Heart left ventricle (tissue), 16 donors: ENCODE measurements at regions of chr10 and their contacts with region 1.

Region 1: GRCh38 chr10:33341637-33342036 is 7.2 kb upstream of the NRP1 start:
- DNase-seq: no peak
- ATAC-seq: no peak
- H3K4me3 ChIP-seq: peak overlapping the region in 7 of 12 donors; percentile 4 to 20 (median 15)
- H3K27ac ChIP-seq: peak overlapping the region in 8 of 12 donors; percentile 2 to 49 (median 34)
- H3K4me1 ChIP-seq: peaks cover 0 to 53% (median 31%) of the 10 kb centered on the region in 12 donors
- H3K27me3 ChIP-seq: peaks cover 0 to 3% (median 0%) of the 10 kb centered on the region in 9 donors
- CTCF ChIP-seq: no peak
- POLR2A ChIP-seq: no peak

Region 2: DNA sequence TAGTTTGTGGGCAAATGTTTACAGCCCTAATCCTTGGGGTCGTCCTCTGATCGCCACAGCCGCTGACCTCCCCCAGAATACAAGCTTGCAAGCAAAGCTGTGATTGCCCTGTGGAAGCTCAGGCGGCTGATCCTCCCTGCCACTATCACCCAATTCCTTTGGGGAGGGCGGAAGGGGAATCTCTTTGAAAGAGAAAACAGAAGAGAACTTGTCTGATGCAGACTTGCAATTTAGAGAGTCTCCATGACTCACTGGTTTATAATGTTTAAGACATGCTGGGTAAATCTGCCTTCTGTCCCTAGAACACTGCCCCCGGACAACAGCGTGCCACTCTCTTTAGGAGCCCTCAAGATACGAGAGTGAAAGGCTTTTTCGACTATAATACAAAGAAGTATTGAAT is 82.7 kb before region 1 on chr10:
- intact Hi-C with region 1: no loop called
- DNase-seq: no peak
- ATAC-seq: peak in 1 of 4 donors; percentile 32
- H3K4me3 ChIP-seq: no peak overlapping the region
- H3K27ac ChIP-seq: peak overlapping the region in 2 of 12 donors; percentile 6 to 22
- H3K4me1 ChIP-seq: peaks cover 0 to 43% (median 15%) of the 10 kb centered on the region in 12 donors
- H3K27me3 ChIP-seq: no peaks in the 10 kb centered on the region
- CTCF ChIP-seq: no peak
- POLR2A ChIP-seq: no peak

Region 3: GRCh38 chr10:33453081-33454025 is 111.7 kb after region 1 on chr10:
- intact Hi-C with region 1: loop called in 1 of 10 experiments (anchors 10 kb)
- DNase-seq: no peak
- ATAC-seq: no peak
- H3K4me3 ChIP-seq: no peak overlapping the region
- H3K27ac ChIP-seq: no peak overlapping the region
- H3K4me1 ChIP-seq: no peaks in the 10 kb centered on the region
- H3K27me3 ChIP-seq: no peaks in the 10 kb centered on the region
- CTCF ChIP-seq: no peak
- POLR2A ChIP-seq: no peak

Region 4: GRCh38 chr10:33460505-33461294 is 119.1 kb after region 1 on chr10:
- intact Hi-C with region 1: loop called in 6 of 10 experiments (anchors 5 to 10 kb)
- DNase-seq: peak; percentile 63 to 84 (median 70)
- ATAC-seq: peak; percentile 94 to 97 (median 96)
- H3K4me3 ChIP-seq: no peak overlapping the region
- H3K27ac ChIP-seq: peak overlapping the region; percentile 15 to 85 (median 64)
- H3K4me1 ChIP-seq: peaks cover 0 to 35% (median 11%) of the 10 kb centered on the region in 12 donors
- H3K27me3 ChIP-seq: no peaks in the 10 kb centered on the region
- CTCF ChIP-seq: no peak
- POLR2A ChIP-seq: no peak